Psoas muscle (tissue), 8 donors: ENCODE measurements at regions of chr17 and their contacts with region 1.

Region 1: DNA sequence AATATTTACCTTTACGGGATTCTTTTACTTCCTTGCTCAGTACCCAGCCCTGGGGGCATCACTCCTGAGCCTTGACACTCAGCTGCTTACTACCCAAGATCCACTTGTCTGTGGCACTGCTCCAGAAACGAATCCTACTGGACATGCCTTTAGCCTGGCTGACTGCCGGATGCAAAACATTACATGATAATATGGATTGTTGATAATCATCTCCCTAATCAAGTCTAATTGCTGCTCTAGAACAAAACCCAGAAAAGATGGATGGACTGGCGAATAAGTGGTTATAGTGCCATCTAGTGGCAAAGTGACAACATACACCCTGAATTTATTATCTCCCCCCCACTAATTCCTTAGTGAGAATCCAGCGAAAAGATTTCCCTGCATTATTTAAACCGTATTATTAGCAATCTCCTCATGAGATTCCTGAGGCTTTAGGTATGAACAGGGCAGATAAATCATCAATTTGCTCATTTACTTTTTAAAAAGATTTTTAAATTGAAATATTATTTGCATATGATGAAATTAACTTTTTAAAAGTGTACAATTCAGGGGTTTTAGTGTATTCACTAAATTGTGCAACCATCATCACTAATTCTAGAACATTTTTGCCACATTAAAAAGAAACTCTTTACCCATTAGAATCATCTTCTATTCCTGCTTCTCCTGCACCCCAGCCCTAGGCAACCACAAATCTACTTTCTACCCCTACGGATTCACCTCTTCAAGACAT is 61.6 kb downstream of the RGS9 start:
- DNase-seq: no peak
- ATAC-seq: peak; percentile 36 to 67 (median 52)
- H3K4me3 ChIP-seq: no peak overlapping the region
- H3K27ac ChIP-seq: no peak overlapping the region
- H3K4me1 ChIP-seq: no peaks in the 10 kb centered on the region
- H3K27me3 ChIP-seq: no peaks in the 10 kb centered on the region
- CTCF ChIP-seq: peak; percentile 81

Region 2: GRCh38 chr17:64773836-64774761 is 424.7 kb before region 1 on chr17:
- intact Hi-C with region 1: loop called in 1 of 2 experiments (anchors 5 kb)
- DNase-seq: peak in 1 of 2 donors; percentile 63
- ATAC-seq: no peak
- H3K4me3 ChIP-seq: no peak overlapping the region
- H3K27ac ChIP-seq: no peak overlapping the region
- H3K4me1 ChIP-seq: peaks cover 8% of the 10 kb centered on the region
- H3K27me3 ChIP-seq: peaks cover 0 to 2% (median 0%) of the 10 kb centered on the region in 3 donors
- CTCF ChIP-seq: no peak

Region 3: DNA sequence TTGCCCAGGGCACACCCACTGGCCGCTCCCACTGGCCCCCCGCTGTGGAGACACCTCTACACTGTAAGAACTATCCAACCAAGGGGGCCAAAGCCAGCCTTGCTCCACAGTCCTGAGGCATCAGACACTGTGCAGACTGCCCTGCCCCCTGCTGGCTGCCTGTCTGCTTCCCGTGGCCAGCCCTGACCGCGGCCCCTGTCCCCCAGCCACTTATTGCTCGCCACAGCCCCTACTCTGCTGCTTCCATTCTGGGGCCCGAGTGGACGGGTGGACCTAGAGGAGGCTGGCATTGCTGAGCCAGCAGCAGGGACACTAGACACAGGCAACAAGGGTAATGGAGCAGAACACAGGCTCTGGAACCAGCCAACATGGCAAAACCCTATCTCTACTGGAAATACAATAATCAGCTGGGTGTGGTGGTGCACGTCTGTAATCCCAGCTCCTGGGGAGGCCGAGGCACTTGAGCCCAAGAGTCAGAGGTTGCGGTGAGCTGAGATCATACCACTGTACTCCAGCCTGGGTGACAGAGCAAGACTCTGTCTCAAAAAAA is 259.8 kb before region 1 on chr17:
- intact Hi-C with region 1: loop called in 1 of 2 experiments (anchors 10 kb)
- DNase-seq: peak; percentile 59 to 67
- ATAC-seq: peak; percentile 67 to 84 (median 74)
- H3K4me3 ChIP-seq: no peak overlapping the region
- H3K27ac ChIP-seq: no peak overlapping the region
- H3K4me1 ChIP-seq: no peaks in the 10 kb centered on the region
- H3K27me3 ChIP-seq: no peaks in the 10 kb centered on the region
- CTCF ChIP-seq: no peak

Region 4: GRCh38 chr17:65074778-65075250 is 124.0 kb before region 1 on chr17:
- intact Hi-C with region 1: no loop called
- DNase-seq: peak; percentile 32 to 76
- ATAC-seq: peak; percentile 57 to 90 (median 86)
- H3K4me3 ChIP-seq: peak overlapping the region; percentile 41
- H3K27ac ChIP-seq: peak overlapping the region; percentile 23
- H3K4me1 ChIP-seq: peaks cover 20% of the 10 kb centered on the region
- H3K27me3 ChIP-seq: no peaks in the 10 kb centered on the region
- CTCF ChIP-seq: no peak

Region 5: DNA sequence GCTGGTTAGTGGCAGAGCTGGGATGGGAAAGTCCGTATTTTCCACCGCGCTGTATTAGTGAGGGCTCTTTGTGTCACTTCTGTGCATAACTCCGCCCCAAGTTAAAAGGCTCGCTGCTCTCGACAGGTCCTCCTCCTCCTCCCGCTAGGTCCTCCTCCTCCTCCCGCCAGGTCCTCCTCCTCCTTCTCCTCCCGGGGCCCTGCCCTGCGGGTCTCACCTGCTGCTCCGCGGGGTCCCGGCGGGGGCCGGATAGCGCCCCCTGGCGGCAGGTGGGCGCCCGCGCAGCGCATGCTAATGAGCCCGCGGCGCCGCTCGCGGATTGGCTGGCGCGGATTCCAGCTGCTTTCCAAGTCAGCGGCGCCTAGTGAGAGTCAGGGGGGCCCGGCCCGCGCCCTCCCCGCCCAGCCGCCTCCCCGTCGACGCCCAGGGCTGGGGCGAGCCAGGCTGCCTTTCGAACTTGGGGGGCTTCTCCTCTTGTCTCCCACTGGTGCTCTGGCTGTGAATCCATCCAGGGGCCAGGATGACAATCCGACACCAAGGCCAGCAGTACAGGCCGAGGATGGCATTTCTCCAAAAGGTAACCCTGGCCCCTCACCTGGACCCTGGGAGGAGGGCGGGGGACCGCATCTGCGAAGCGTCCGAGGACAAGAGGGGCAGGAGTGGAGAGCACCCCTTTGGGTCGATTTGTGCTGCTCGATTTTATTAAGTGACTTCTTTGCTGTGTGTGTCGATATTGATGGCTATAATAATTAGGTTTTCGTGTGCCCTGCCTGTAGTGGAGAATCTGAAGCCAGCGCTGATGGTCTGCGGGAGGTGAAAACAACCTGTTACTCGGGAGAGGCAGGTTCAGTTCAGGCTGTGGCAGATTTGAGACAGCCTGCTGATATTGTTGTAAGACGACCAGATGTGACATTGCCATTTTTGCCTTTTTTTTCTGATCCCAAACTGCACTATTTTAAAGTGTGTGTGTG is 61.5 kb before region 1 on chr17 and contains the start of gene RGS9:
- intact Hi-C with region 1: loop called in 1 of 2 experiments (anchors 5 kb)
- DNase-seq: peak; percentile 85 to 92
- ATAC-seq: peak; percentile 94 to 99 (median 99)
- H3K4me3 ChIP-seq: peak within 1 kb of the TSS; percentile 61
- H3K27ac ChIP-seq: no peak within 1 kb of the TSS
- H3K4me1 ChIP-seq: no peaks in the 10 kb centered on the region
- H3K27me3 ChIP-seq: peaks cover 0 to 2% (median 0%) of the 10 kb centered on the region in 3 donors
- CTCF ChIP-seq: peak; percentile 97
- total RNA-seq, gene RGS9: 1.5 to 4.8 (median 2.7) TPM

Region 6: GRCh38 chr17:65434251-65434650 is 235.4 kb after region 1 on chr17:
- intact Hi-C with region 1: no loop called
- DNase-seq: no peak
- ATAC-seq: peak in 1 of 4 donors; percentile 39
- H3K4me3 ChIP-seq: no peak overlapping the region
- H3K27ac ChIP-seq: no peak overlapping the region
- H3K4me1 ChIP-seq: no peaks in the 10 kb centered on the region
- H3K27me3 ChIP-seq: no peaks in the 10 kb centered on the region
- CTCF ChIP-seq: no peak